ENCODE measurements at regions of chr15 and their contacts with region 1.

Region 1: GRCh38 chr15:83935774-83936173 is 281.9 kb downstream of the ADAMTSL3 start:
- DNase-seq: no peak
- H3K4me3 Mint-ChIP-seq: no peak overlapping the region
- H3K27ac Mint-ChIP-seq: no peak overlapping the region
- H3K4me1 Mint-ChIP-seq: no peaks in the 10 kb centered on the region
- H3K27me3 Mint-ChIP-seq: no peaks in the 10 kb centered on the region
- CTCF ChIP-seq: no peak

Region 2: DNA sequence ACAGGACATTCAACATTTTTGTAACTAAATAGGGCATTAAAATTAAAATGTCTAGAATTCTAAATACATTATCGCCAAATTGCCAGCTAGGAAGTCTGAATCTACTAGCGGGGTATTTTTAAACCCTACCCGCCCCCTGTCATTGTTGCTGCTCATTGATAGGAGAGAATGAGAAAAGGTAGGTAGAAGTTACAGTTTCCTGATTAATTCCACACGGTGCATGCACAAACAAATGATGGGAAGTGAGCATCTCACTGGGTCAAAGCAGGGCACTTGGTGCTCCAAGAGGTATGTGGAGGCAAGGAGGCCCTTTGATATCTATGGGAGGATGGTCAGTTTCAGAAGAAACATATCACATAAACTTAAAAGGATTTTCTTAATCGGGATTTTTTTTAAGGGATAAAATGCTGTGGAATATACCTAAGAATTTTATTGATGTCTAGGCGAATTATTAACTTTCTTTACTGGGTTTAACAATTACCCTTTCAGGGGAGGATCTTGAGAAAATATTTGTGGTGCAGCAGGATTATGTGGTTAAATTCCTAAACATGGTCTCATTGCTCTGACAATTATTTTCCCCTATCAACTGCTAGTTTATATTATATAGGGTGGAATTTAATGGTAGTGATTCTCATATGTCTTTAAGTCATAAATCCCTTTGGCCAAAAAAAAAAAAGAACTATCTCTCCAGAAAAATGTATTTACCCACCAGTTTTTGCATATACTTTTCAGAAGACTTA is 63.8 kb after region 1 on chr15:
- CTCF ChIA-PET with region 1: no interaction called
- intact Hi-C with region 1: loop called (anchors 5 kb)
- DNase-seq: peak; percentile 27
- H3K4me3 Mint-ChIP-seq: no peak overlapping the region
- H3K27ac Mint-ChIP-seq: peak overlapping the region; percentile 46
- H3K4me1 Mint-ChIP-seq: peaks cover 28% of the 10 kb centered on the region
- H3K27me3 Mint-ChIP-seq: no peaks in the 10 kb centered on the region
- CTCF ChIP-seq: no peak

Measured in Calu3 (cell line).